ENCODE measurements at regions of chr12 and their contacts with region 1.

Region 1: GRCh38 chr12:43728117-43728516 is 30.5 kb downstream of the PUS7L start:
- DNase-seq: no peak
- H3K4me3 Mint-ChIP-seq: no peak overlapping the region
- H3K27ac Mint-ChIP-seq: no peak overlapping the region
- H3K4me1 Mint-ChIP-seq: no peaks in the 10 kb centered on the region
- H3K27me3 Mint-ChIP-seq: no peaks in the 10 kb centered on the region
- CTCF ChIP-seq: no peak

Region 2: GRCh38 chr12:43349863-43350262 is 378.3 kb before region 1 on chr12:
- CTCF ChIA-PET with region 1: no interaction called
- intact Hi-C with region 1: loop called (anchors 5 kb)
- DNase-seq: no peak
- H3K4me3 Mint-ChIP-seq: no peak overlapping the region
- H3K27ac Mint-ChIP-seq: no peak overlapping the region
- H3K4me1 Mint-ChIP-seq: no peaks in the 10 kb centered on the region
- H3K27me3 Mint-ChIP-seq: no peaks in the 10 kb centered on the region
- CTCF ChIP-seq: no peak

Region 3: DNA sequence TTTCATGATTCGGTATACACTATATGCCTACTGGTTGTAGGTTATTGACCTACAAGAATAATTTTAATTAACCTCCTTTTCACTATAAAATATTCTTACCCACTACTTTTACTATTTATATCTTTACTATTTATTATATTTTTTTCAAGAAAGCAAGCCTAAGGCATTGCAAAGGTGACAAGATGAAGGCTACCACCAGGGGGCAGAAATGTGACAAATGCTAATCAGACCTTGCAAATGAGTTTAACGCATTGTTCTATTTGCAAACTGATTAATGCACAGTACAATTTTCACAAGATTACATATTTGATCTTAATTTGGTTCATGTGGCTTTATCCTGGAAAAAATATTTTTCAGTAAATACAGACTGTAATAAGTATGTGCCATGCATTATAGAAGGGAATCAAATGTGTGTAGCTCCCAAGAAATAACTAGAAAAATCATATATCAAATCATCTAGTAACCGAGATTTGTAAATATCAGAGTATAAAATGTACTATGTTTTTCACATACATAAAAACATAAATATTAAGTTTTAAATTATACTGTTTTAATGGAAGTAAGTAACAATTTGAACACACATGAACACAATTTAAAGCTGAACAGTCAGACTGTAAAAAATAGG is 283.1 kb before region 1 on chr12:
- CTCF ChIA-PET with region 1: no interaction called
- intact Hi-C with region 1: loop called (anchors 5 kb)
- DNase-seq: peak; percentile 68
- H3K4me3 Mint-ChIP-seq: no peak overlapping the region
- H3K27ac Mint-ChIP-seq: no peak overlapping the region
- H3K4me1 Mint-ChIP-seq: no peaks in the 10 kb centered on the region
- H3K27me3 Mint-ChIP-seq: no peaks in the 10 kb centered on the region
- CTCF ChIP-seq: peak; percentile 48

Region 4: DNA sequence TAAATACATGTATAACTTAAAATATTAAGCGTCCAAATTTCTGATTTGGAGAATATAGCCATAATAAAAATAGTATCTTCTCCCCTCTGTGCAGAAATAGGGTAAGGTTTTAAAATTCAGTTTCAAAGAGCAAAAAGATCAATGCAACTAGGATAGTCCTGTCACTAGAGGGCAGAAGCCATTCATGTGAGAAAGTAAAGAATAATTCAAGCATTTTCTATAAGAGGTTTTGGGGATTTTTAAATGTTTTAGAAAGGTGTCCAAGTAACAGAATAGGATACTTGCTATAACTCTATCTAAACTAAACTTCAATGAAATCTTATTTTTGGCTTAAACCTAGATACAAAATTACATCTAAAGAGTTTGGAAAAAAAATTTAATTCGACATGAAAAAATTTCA is 226.4 kb before region 1 on chr12:
- CTCF ChIA-PET with region 1: no interaction called
- intact Hi-C with region 1: loop called (anchors 2 kb)
- DNase-seq: no peak
- H3K4me3 Mint-ChIP-seq: no peak overlapping the region
- H3K27ac Mint-ChIP-seq: no peak overlapping the region
- H3K4me1 Mint-ChIP-seq: no peaks in the 10 kb centered on the region
- H3K27me3 Mint-ChIP-seq: no peaks in the 10 kb centered on the region
- CTCF ChIP-seq: no peak

Region 5: DNA sequence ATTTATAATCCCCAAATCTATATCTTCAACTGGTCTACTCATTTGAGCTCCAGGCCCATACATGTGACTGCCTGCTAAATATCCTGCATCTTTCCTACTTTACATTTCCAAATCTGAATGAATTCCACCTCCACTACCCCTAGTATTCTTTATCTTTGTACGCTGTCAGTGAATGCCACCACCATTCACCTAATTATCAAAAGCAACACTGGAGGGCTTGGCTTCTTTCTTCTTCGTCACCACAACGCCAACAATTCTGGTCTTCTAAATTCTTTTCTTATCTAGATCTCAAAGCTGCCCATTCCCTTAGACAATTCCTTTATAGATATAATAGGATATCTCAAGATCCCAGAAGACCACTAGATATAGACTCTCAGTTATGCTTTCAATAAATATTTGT is 129.0 kb before region 1 on chr12:
- CTCF ChIA-PET with region 1: no interaction called
- intact Hi-C with region 1: no loop called
- DNase-seq: no peak
- H3K4me3 Mint-ChIP-seq: no peak overlapping the region
- H3K27ac Mint-ChIP-seq: no peak overlapping the region
- H3K4me1 Mint-ChIP-seq: no peaks in the 10 kb centered on the region
- H3K27me3 Mint-ChIP-seq: no peaks in the 10 kb centered on the region
- CTCF ChIP-seq: no peak

Region 6: DNA sequence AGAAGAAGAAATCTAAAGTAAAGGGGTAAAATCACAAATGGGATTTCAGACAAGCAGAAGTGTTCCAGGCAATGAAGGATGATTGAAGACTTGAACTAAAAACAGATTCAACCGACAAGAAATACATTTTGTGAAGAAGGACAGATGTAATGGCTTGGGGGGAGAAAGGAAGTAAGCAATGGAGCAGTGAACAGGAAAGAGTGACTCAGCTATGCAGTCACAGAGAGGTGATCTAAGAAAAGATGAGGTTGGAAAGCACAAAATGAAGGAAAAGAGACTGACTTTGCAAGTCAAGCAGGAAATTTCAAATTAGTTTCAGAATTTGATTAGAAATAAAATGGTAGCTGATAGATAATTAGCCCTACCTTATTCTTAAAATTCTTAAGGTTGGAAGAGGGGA is 36.1 kb before region 1 on chr12:
- CTCF ChIA-PET with region 1: no interaction called
- intact Hi-C with region 1: no loop called
- DNase-seq: no peak
- H3K4me3 Mint-ChIP-seq: no peak overlapping the region
- H3K27ac Mint-ChIP-seq: no peak overlapping the region
- H3K4me1 Mint-ChIP-seq: no peaks in the 10 kb centered on the region
- H3K27me3 Mint-ChIP-seq: no peaks in the 10 kb centered on the region
- CTCF ChIP-seq: no peak

Region 7: DNA sequence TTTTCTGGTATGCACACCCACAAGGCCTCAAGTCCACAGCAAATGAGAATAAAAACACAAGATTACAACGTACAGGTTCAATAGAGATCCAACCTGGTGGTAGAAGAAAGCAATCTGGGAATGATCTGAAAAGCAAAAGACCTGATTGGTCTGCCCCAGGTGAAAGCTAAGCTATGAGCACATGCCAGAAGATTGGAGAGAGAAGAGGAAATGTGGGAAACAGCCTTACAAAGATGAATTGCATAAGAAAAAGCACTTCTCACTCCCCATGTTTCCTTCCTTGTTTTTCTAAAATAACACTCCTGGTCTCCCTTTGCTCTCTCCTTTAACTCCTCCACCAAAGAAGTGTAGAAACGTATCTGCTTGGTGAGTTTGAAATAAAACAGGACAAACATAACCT is 1410.5 kb after region 1 on chr12:
- CTCF ChIA-PET with region 1: no interaction called
- intact Hi-C with region 1: no loop called
- DNase-seq: no peak
- H3K4me3 Mint-ChIP-seq: no peak overlapping the region
- H3K27ac Mint-ChIP-seq: no peak overlapping the region
- H3K4me1 Mint-ChIP-seq: no peaks in the 10 kb centered on the region
- H3K27me3 Mint-ChIP-seq: peaks cover 6% of the 10 kb centered on the region
- CTCF ChIP-seq: no peak

Measured in Calu3 (cell line).